Thyroid gland (tissue), 4 donors: ENCODE measurements at regions of chr11 and their contacts with region 1.

Region 1: GRCh38 chr11:68383976-68384501 is 71.6 kb downstream of the LRP5 start:
- DNase-seq: peak; percentile 58 to 65
- H3K4me3 ChIP-seq: no peak overlapping the region
- H3K27ac ChIP-seq: no peak overlapping the region
- H3K4me1 ChIP-seq: peaks cover 21 to 34% of the 10 kb centered on the region in 2 donors
- H3K27me3 ChIP-seq: no peaks in the 10 kb centered on the region
- CTCF ChIP-seq: peak; percentile 82 to 95 (median 88)
- POLR2A ChIP-seq: no peak

Region 2: GRCh38 chr11:68312117-68312779 is 71.8 kb before region 1 on chr11 and contains the start of gene LRP5:
- intact Hi-C with region 1: loop called (anchors 5 kb)
- DNase-seq: peak; percentile 43 to 53
- H3K4me3 ChIP-seq: peak within 1 kb of the TSS; percentile 47 to 76 (median 65)
- H3K27ac ChIP-seq: peak within 1 kb of the TSS; percentile 79 to 92 (median 82)
- H3K4me1 ChIP-seq: peaks cover 37 to 39% of the 10 kb centered on the region in 2 donors
- H3K27me3 ChIP-seq: no peaks in the 10 kb centered on the region
- CTCF ChIP-seq: no peak
- POLR2A ChIP-seq: peak in 1 of 2 donors; percentile 62
- total RNA-seq, gene LRP5: 45.8 to 75.5 (median 54.3) TPM

Region 3: DNA sequence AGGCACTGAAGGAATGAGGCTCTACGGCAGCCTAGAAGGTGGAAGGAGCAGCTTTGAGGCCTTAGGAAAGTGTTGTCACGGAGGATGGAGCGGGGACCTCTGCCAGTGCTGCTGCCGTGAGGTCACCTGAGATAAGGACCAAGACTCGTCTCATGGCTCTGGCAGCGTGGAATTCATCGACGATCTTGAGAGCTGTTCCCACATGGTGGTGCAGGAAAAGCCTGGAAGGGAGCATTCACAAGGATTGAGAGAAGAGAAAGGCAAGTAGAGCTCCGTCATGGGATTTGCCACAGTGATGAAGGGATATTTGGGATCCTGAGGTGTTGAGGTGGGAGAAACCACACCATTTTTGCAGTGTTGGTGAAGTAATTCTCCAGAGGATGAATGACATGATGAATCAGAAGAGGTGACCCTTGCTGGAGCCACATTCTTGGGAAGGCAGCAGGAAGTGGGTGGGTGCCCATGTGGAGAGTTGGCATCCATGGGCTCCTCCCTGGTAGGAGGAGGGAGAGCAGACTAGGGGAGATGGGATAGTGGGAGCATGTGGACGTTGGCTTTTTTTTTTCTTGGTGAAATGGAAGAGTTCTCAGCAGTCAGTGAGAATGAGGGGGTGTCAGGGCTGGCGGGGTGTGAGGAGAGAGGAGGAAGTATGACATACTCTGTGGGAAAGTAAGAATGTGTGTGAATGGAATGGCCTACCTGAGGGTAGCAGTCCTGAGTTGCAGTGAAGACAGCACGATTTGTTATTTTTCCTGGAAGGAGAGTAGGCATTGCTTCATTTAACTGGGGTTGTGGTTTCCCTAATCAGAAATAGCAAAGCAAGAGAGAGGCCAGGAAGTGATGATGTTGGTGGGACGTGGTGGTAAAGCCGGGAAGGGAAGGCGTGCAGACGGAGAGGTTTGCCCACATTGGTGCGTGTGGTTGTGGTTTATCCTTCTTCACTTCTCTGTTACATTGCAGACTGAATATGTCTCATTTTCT is 87.6 kb after region 1 on chr11:
- intact Hi-C with region 1: no loop called
- DNase-seq: no peak
- H3K4me3 ChIP-seq: no peak overlapping the region
- H3K27ac ChIP-seq: no peak overlapping the region
- H3K4me1 ChIP-seq: peaks cover 64 to 72% of the 10 kb centered on the region in 2 donors
- H3K27me3 ChIP-seq: no peaks in the 10 kb centered on the region
- CTCF ChIP-seq: no peak
- POLR2A ChIP-seq: no peak

Region 4: GRCh38 chr11:68659158-68659921 is 275.3 kb after region 1 on chr11:
- intact Hi-C with region 1: no loop called
- DNase-seq: peak; percentile 76 to 89
- H3K4me3 ChIP-seq: no peak overlapping the region
- H3K27ac ChIP-seq: peak overlapping the region in 1 of 3 donors; percentile 45
- H3K4me1 ChIP-seq: peaks cover 0 to 9% of the 10 kb centered on the region in 2 donors
- H3K27me3 ChIP-seq: no peaks in the 10 kb centered on the region
- CTCF ChIP-seq: no peak
- POLR2A ChIP-seq: no peak